Activated CD4-positive, alpha-beta memory T cell treated with anti-CD3 and anti-CD28 coated beads for 36 hours (primary cell): ENCODE measurements at regions of chr14 and their contacts with region 1.

Region 1: DNA sequence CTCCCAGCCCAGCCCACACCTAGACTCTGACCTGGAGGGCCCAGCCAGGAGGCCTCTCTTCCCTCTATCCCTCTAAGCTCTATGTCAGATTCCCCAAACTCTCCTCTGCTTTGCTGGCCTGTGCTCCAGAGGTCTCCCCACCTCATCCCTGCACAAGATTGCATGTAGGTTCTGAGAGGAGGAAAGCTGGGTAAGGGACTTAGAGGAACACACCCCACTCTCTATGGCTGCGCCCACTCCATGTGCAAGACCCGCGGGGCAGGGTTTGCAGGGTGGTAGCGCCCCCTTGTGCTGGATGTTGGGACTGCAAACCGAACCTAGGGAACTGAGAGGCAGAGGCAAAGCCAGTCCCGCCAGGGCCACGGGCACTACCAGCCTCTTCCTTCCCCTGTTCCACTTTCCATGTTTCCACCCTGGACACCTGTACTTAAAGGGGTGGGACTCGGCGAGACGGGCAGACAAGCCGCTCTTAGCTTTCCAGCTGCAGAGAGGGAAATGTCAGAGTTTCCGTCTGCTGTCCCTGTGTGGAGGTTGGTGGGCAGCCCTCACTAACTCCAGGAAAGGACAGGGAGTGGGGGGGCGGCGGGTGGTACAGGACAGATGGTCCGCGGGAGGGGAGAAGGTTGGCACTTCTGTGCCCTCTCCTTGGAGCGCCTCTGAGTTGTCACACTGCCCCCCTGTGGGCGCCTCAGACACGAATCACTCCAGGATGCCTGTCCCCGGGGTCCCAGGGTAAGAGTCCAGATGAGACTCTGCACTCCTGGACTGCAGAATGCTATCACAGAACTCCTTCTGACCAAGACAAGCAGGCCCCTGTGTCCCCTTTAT is 16.8 kb downstream of the MMP14 start:
- DNase-seq: peak; percentile 94
- H3K4me3 Mint-ChIP-seq: peak overlapping the region; percentile 72
- H3K27ac Mint-ChIP-seq: peak overlapping the region; percentile 73
- H3K4me1 Mint-ChIP-seq: peaks cover 32% of the 10 kb centered on the region
- H3K27me3 Mint-ChIP-seq: peaks cover 5% of the 10 kb centered on the region

Region 2: DNA sequence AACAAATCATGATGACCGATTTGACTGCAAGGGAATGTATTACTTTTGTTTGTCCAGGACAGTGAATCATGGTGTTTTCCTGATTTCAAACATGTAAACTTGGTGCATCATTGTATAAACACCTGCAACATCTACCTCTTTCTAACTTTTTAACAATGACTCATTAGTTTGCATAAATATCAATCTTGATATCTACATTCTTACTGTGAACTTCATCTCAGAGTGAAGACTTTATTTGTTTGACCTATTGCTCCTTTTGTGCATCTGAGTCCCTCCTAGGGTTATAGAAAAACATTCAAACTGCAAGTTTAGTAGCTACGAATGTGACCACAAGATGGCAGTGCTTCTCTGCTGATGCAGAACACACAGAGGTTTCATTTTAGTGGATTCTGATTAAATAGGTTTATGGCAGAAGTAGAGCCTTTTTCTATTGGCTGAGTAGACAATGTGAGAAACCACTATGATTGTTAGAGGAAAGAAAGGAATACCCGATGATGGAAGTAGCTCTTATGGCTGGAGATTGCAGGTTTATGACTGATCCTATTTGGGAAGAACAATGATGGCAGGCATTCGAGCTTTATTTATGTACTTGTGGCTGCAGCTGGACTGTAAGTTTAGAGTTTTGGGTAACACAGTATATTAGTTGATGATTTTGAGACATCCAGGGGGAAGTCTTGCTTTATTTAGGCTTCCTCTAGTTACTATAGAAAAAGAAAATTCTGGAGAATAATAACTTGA is 935.3 kb before region 1 on chr14:
- CTCF ChIA-PET with region 1: no interaction called
- POLR2A ChIA-PET with region 1: no interaction called
- intact Hi-C with region 1: loop called (anchors 10 kb)
- DNase-seq: peak; percentile 61
- H3K4me3 Mint-ChIP-seq: peak overlapping the region; percentile 73
- H3K27ac Mint-ChIP-seq: peak overlapping the region; percentile 73
- H3K4me1 Mint-ChIP-seq: peaks cover 58% of the 10 kb centered on the region
- H3K27me3 Mint-ChIP-seq: no peaks in the 10 kb centered on the region

Region 3: GRCh38 chr14:22653012-22653621 is 200.0 kb before region 1 on chr14:
- CTCF ChIA-PET with region 1: interaction called, 8 read pairs
- POLR2A ChIA-PET with region 1: no interaction called
- intact Hi-C with region 1: loop called (anchors 5 kb)
- DNase-seq: peak; percentile 66
- H3K4me3 Mint-ChIP-seq: no peak overlapping the region
- H3K27ac Mint-ChIP-seq: no peak overlapping the region
- H3K4me1 Mint-ChIP-seq: no peaks in the 10 kb centered on the region
- H3K27me3 Mint-ChIP-seq: no peaks in the 10 kb centered on the region

Region 4: DNA sequence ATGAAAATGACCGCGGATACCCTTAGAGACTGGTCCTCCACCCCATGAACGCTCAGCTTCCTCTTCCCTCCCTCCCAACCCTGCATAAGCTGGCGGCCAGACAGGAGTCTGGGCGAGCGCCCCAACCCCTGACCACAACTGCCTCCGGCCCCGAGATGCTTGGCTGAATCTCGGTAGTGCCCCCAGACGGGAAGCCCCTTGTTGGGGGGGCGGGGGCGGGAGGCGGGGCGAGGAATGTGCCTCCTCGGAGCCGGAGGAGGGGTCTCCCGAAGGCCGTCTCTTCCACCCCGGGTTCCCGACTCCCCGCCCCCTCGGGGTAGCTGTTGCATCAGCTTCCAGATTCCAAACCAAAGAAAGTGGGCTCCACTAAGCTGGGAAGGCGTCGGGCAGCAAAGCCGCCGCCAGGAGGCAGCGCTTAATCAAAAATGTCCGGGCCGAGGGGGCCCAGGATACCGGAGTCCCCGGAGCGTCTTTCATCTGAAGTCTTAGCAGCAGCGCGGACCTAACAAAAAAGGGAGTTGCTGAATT is 30.5 kb before region 1 on chr14:
- CTCF ChIA-PET with region 1: interaction called, 228 read pairs
- POLR2A ChIA-PET with region 1: interaction called, 5 read pairs
- intact Hi-C with region 1: loop called (anchors 1 kb)
- DNase-seq: peak; percentile 77
- H3K4me3 Mint-ChIP-seq: peak overlapping the region; percentile 63
- H3K27ac Mint-ChIP-seq: no peak overlapping the region
- H3K4me1 Mint-ChIP-seq: peaks cover 26% of the 10 kb centered on the region
- H3K27me3 Mint-ChIP-seq: peaks cover 12% of the 10 kb centered on the region

Region 5: GRCh38 chr14:22836301-22837113 is 16.6 kb before region 1 on chr14 and contains the start of gene MMP14:
- CTCF ChIA-PET with region 1: interaction called, 228 read pairs
- POLR2A ChIA-PET with region 1: no interaction called
- intact Hi-C with region 1: no loop called
- DNase-seq: no peak
- H3K4me3 Mint-ChIP-seq: peak within 1 kb of the TSS; percentile 48
- H3K27ac Mint-ChIP-seq: no peak within 1 kb of the TSS
- H3K4me1 Mint-ChIP-seq: peaks cover 12% of the 10 kb centered on the region
- H3K27me3 Mint-ChIP-seq: peaks cover 18% of the 10 kb centered on the region
- total RNA-seq, gene MMP14: 1.1 to 1.4 TPM

Region 6: DNA sequence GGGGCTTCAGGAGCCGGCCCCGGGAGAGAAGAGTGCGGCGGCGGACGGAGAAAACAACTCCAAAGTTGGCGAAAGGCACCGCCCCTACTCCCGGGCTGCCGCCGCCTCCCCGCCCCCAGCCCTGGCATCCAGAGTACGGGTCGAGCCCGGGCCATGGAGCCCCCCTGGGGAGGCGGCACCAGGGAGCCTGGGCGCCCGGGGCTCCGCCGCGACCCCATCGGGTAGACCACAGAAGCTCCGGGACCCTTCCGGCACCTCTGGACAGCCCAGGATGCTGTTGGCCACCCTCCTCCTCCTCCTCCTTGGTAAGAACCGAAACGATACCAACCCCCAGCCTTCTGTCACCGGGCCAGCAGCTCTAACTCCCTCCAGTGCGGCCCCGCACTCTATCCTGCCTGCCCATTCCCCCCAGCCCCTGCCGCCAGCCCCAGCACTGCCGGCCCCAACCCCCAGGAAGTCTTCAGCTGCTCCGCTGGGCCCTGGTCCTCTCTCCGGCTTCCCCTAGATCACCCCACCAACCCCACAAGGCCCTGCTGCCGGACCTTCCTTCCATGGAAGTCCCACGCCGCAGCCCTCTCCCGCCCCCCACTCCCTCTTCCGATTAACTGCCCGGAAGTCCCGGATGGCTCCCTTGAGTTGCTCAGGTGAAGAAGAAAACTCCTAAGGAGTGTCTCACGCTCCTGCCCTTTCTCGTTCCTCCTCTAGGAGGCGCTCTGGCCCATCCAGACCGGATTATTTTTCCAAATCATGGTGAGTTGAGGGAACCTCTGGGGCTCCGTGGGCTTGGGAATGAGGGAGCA is 19.1 kb after region 1 on chr14:
- CTCF ChIA-PET with region 1: interaction called, 75 read pairs
- POLR2A ChIA-PET with region 1: interaction called, 3 read pairs
- intact Hi-C with region 1: no loop called
- DNase-seq: peak; percentile 84
- H3K4me3 Mint-ChIP-seq: peak overlapping the region; percentile 88
- H3K27ac Mint-ChIP-seq: peak overlapping the region; percentile 100
- H3K4me1 Mint-ChIP-seq: peaks cover 33% of the 10 kb centered on the region
- H3K27me3 Mint-ChIP-seq: no peaks in the 10 kb centered on the region

Region 7: GRCh38 chr14:23020143-23021128 is 167.3 kb after region 1 on chr14:
- CTCF ChIA-PET with region 1: no interaction called
- POLR2A ChIA-PET with region 1: no interaction called
- intact Hi-C with region 1: no loop called
- DNase-seq: no peak
- H3K4me3 Mint-ChIP-seq: no peak overlapping the region
- H3K27ac Mint-ChIP-seq: no peak overlapping the region
- H3K4me1 Mint-ChIP-seq: peaks cover 23% of the 10 kb centered on the region
- H3K27me3 Mint-ChIP-seq: no peaks in the 10 kb centered on the region